Prostate gland (tissue), 2 donors: ENCODE measurements at regions of chr3 and their contacts with region 1.

Region 1: DNA sequence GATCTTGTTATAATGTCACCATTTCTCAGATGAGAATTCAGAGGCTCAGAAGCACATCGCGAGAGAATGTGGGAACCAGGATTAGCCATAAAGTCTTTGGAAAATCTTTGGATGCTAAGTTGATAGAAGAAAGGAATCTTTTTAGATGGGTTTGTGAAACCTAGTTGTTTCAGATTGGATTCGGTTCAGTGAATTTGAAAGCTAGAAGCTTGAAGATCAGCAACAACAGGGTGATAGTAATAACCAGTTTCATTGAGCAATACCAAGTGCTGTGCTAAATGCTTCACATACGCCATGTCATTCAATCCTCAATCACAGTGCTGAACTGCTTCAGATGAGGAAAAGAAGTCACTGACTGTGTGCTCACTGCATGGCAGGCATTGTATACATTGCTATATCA is 47.4 kb upstream of the MITF start:
- DNase-seq: no peak
- H3K4me3 ChIP-seq: no peak overlapping the region
- H3K27ac ChIP-seq: no peak overlapping the region
- H3K4me1 ChIP-seq: no peaks in the 10 kb centered on the region
- H3K27me3 ChIP-seq: no peaks in the 10 kb centered on the region
- CTCF ChIP-seq: no peak
- POLR2A ChIP-seq: no peak

Region 2: GRCh38 chr3:69739204-69740102 is 47.6 kb after region 1 on chr3 and contains the start of gene MITF:
- intact Hi-C with region 1: loop called (anchors 5 kb)
- DNase-seq: peak; percentile 92
- H3K4me3 ChIP-seq: peak within 1 kb of the TSS; percentile 78 to 81
- H3K27ac ChIP-seq: peak within 1 kb of the TSS; percentile 78 to 81
- H3K4me1 ChIP-seq: no peaks in the 10 kb centered on the region
- H3K27me3 ChIP-seq: no peaks in the 10 kb centered on the region
- CTCF ChIP-seq: no peak
- POLR2A ChIP-seq: peak; percentile 64
- total RNA-seq, gene MITF: 7.7 to 17.6 TPM

Region 3: DNA sequence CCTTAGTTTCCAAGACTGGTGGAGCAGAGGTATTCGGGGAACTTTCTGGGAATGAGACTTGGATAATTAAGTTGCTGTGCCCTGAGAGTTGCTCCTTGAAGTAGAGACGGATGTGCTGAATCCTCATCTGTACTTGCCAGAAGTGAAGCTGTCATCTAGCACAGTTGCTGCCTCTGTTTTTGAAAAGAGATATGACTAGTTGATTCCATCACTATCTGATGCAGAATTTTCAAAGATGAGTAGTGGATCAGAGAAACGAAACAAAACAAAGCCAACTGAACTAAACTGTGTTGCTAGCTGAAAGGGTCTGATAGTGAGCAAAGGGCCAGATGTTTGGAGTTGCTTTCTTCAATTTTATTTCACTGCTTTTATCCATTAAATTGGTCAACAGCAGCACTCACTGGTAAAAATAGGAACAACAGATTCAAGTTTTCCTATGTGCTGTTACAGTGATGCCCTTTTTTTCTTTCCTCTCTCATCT is 100.1 kb after region 1 on chr3:
- intact Hi-C with region 1: loop called (anchors 2 kb)
- DNase-seq: no peak
- H3K4me3 ChIP-seq: no peak overlapping the region
- H3K27ac ChIP-seq: no peak overlapping the region
- H3K4me1 ChIP-seq: no peaks in the 10 kb centered on the region
- H3K27me3 ChIP-seq: no peaks in the 10 kb centered on the region
- CTCF ChIP-seq: peak in 3 of 4 experiments; percentile 14 to 49 (median 42)
- POLR2A ChIP-seq: no peak

Region 4: GRCh38 chr3:69855436-69856162 is 163.7 kb after region 1 on chr3:
- intact Hi-C with region 1: loop called (anchors 5 kb)
- DNase-seq: no peak
- H3K4me3 ChIP-seq: no peak overlapping the region
- H3K27ac ChIP-seq: no peak overlapping the region
- H3K4me1 ChIP-seq: no peaks in the 10 kb centered on the region
- H3K27me3 ChIP-seq: no peaks in the 10 kb centered on the region
- CTCF ChIP-seq: peak in 3 of 4 experiments; percentile 17 to 41 (median 23)
- POLR2A ChIP-seq: no peak

Region 5: GRCh38 chr3:69948246-69948862 is 256.5 kb after region 1 on chr3:
- intact Hi-C with region 1: loop called (anchors 2 kb)
- DNase-seq: no peak
- H3K4me3 ChIP-seq: no peak overlapping the region
- H3K27ac ChIP-seq: no peak overlapping the region
- H3K4me1 ChIP-seq: no peaks in the 10 kb centered on the region
- H3K27me3 ChIP-seq: no peaks in the 10 kb centered on the region
- CTCF ChIP-seq: peak; percentile 16 to 63 (median 48)
- POLR2A ChIP-seq: no peak